Left ventricle myocardium superior (tissue), 1 donor: ENCODE measurements at regions of chr6 and their contacts with region 1.

Region 1: DNA sequence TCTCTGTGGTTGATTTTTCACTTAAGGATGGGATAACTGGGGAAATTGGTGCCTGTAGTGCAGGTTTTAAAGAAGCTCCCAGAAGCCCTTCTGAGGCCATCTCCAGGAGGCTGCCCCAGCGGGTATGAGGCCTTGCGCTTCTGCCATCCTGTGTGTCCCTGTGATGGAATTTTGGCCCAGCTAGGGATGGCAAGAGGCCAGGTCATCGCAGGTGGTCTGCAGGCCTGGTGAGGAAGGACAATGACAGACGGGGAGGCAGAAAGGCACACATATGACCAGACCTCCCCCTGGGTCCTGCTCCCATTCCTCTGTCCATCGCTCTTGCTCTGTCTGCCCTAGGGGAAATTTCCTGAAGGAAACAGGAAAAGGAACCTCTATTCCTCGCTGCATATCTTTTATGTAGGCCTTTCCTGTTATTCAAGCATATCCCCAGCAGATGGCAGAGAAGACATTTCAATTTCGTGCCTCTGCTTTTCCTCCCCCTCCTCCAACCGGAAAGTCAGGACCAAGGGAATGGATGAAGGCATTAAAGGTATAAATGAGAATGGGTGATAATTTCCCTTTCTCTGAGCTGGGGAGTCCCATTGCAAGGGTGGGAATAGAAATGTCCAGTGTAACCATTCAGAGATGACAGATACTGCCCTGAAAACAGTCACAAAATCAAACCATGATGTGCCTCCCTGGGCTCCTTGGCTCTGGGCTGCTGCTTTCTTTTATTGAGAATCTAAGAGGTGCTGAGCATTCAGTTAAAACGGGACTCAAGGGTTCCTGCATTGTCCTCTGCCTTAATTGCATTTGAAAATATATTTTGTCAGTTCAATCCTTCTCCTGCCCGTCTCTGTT is 17.6 kb upstream of the HLA-F start:
- DNase-seq: no peak
- ATAC-seq: peak; percentile 68

Region 2: GRCh38 chr6:29589423-29590048 is 116.1 kb before region 1 on chr6:
- intact Hi-C with region 1: no loop called
- DNase-seq: no peak
- ATAC-seq: peak; percentile 57

Region 3: GRCh38 chr6:29834564-29835436 is 129.2 kb after region 1 on chr6:
- intact Hi-C with region 1: loop called (anchors 2 kb)
- DNase-seq: peak; percentile 62
- ATAC-seq: peak; percentile 57

Region 4: GRCh38 chr6:30295837-30296236 is 590.2 kb after region 1 on chr6:
- intact Hi-C with region 1: no loop called
- DNase-seq: no peak
- ATAC-seq: no peak